Activated naive CD4-positive, alpha-beta T cell treated with anti-CD3 and anti-CD28 coated beads for 36 hours (primary cell): ENCODE measurements at regions of chr12 and their contacts with region 1.

Region 1: DNA sequence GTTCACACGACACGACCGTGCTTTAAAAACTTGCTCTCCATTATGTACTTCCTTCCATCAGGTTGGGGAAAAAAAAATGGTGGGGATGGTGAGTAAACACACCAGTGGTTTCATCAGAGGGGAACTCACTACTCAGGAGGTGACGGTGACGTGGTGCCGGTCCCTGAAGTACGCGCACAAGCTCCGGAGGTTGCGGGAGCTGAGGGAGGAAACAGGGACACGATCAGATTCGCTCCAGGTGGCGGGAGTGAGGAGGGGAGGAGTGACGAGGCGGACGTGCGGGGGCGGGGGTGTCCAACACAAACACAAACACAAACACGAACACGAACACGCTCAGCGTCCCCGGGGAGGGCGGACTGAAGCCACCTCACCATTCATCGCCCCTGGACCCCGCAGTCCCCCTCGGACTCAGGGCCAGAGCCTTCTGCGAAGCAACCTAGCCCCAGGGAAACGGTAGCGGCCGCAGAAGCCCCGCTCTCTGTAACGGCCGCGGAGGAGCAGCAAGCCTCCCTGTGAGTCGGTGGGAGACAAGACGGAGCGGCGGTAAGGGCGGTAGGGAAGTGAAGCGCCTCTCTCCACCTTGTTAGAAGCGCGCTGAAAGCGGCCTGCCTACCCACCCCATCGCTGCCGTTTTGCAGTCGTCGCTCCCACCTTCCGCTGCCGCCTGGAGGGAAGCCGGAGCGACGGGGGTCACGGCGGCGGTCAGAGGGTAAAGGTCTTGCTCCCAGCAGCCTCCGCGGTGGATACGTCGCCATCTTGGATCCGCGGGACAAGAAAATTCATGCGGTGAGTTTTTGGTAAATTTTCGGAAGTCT is at the start of gene CNOT2:
- DNase-seq: peak; percentile 94
- H3K4me3 Mint-ChIP-seq: peak within 1 kb of the TSS; percentile 99
- H3K27ac Mint-ChIP-seq: peak within 1 kb of the TSS; percentile 100
- H3K4me1 Mint-ChIP-seq: peaks cover 48% of the 10 kb centered on the region
- H3K27me3 Mint-ChIP-seq: no peaks in the 10 kb centered on the region
- total RNA-seq, gene CNOT2: 66.0 to 66.2 TPM

Region 2: GRCh38 chr12:69330475-69331473 is 912.1 kb before region 1 on chr12:
- CTCF ChIA-PET with region 1: no interaction called
- intact Hi-C with region 1: loop called (anchors 10 kb)
- DNase-seq: peak; percentile 74
- H3K4me3 Mint-ChIP-seq: peak overlapping the region; percentile 80
- H3K27ac Mint-ChIP-seq: peak overlapping the region; percentile 90
- H3K4me1 Mint-ChIP-seq: peaks cover 60% of the 10 kb centered on the region
- H3K27me3 Mint-ChIP-seq: no peaks in the 10 kb centered on the region

Region 3: DNA sequence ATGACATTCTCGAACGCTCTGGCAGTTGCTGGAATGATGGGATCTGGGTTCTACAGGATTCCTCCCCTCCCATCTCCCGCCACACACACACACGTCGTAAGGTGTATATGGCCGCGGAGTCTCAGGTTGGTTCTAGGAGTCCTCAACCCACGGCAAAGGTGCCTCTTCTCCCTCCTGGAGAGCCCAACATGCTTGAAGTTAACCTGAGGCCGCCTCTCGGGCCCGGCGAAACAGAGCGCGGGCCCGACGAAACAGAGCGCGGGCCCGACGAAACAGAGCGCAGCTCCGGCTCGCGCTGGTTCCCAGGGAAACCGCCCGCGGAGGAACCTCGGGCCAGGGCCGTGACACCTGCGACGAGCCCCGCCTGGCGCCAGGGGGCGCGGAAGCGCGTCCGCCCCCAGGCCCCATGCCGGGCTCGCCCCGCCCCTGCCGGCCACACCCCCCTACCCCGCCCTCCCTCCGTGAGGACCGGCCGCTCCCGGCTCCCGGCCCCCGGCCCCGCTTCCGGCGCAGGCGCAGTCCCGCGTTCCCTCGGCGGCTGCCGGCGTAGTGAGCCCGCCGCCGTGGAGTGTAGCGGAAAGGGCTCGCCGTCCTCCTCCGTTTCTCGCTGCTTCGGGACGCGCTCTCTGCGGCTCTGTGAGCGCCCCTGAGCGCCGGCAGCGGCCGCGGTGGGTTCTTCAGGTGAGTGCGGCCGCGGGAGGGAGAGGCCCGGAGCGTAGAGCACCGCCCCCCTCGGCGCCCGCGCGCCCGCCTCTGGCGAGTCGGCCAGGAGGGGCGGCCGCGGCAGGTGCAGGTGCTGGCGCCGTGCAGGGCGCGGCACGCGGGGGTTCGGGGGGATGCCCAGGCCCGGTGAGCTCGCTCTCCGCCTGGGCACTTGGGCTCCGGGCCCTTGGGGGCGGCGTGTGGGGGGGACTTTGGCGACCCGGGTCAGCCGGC is 504.3 kb before region 1 on chr12 and contains the start of gene RAB3IP:
- CTCF ChIA-PET with region 1: no interaction called
- intact Hi-C with region 1: loop called (anchors 1 kb)
- DNase-seq: peak; percentile 94
- H3K4me3 Mint-ChIP-seq: peak within 1 kb of the TSS; percentile 77
- H3K27ac Mint-ChIP-seq: peak within 1 kb of the TSS; percentile 75
- H3K4me1 Mint-ChIP-seq: peaks cover 18% of the 10 kb centered on the region
- H3K27me3 Mint-ChIP-seq: no peaks in the 10 kb centered on the region
- total RNA-seq, gene RAB3IP: 23.0 to 25.4 TPM

Region 4: DNA sequence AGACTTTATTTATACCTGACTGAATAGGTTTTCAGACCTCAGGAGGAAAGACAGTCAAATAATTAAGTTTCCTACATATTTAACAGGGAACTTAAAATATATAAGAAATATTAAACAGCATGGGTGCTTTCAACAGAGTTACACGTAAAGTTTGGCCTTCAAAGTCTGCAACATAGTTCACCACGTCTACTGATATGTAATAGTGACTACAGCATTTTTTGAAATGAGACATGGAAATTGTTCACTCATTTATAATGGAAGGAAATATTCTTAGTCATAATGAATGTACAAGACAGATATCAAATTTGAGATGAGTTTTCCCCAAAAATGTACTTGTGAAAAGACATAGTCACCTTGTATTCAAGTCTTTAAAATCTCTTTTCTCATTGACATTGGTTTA is 66.4 kb after region 1 on chr12:
- CTCF ChIA-PET with region 1: no interaction called
- intact Hi-C with region 1: loop called (anchors 2 kb)
- DNase-seq: no peak
- H3K4me3 Mint-ChIP-seq: no peak overlapping the region
- H3K27ac Mint-ChIP-seq: no peak overlapping the region
- H3K4me1 Mint-ChIP-seq: peaks cover 41% of the 10 kb centered on the region
- H3K27me3 Mint-ChIP-seq: no peaks in the 10 kb centered on the region

Region 5: GRCh38 chr12:71663561-71664294 is 1420.8 kb after region 1 on chr12 and contains the start of gene ZFC3H1:
- CTCF ChIA-PET with region 1: no interaction called
- intact Hi-C with region 1: loop called (anchors 2 kb)
- DNase-seq: peak; percentile 95
- H3K4me3 Mint-ChIP-seq: peak within 1 kb of the TSS; percentile 97
- H3K27ac Mint-ChIP-seq: peak within 1 kb of the TSS; percentile 99
- H3K4me1 Mint-ChIP-seq: peaks cover 42% of the 10 kb centered on the region
- H3K27me3 Mint-ChIP-seq: no peaks in the 10 kb centered on the region
- total RNA-seq, gene ZFC3H1: 56.9 to 62.6 TPM